ENCODE measurements at regions of chrX and their contacts with region 1.

Region 1: DNA sequence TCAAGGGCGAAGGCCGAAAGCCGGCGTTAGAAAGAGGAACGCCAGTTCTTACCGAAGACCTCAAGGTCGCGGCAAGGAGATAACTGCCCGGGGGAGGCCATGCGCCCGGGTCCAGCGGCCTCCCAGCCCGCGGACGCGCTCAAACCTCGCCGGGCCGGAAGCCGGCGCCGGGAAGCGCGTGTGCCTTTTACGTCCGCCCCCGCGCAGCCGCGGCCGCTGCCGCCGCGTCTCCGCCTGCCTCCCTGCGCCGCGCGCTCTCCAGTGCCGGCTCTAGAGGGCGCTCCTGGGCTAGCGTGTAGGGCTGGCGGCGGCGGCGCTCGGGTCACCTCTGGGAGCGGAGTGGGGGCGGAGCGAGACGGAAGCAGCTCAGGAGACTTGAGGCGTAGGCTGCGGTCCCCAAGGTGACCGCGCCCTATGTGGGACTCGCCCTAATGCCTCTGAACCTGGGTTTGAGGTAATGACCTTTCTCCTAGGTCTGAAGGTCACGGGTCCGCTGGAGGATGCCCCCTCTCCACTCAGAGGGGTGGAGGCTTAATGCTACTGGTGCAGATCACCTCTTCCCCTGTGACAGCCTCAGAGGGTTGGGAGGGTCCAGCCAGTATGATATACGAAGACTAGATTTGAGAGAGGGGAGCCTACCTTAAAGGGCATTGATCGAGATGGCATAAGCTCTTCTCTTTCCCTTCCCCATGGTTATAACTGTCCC is 839 bp downstream of the SLC25A5 start:
- DNase-seq: peak; percentile 81 to 90 (median 87)
- ATAC-seq: peak; percentile 87
- H3K4me3 ChIP-seq: peak overlapping the region; percentile 87
- H3K4me3 Mint-ChIP-seq: peak overlapping the region; percentile 78 to 97 (median 89)
- H3K27ac ChIP-seq: peak overlapping the region; percentile 99
- H3K27ac Mint-ChIP-seq: peak overlapping the region; percentile 82 to 95 (median 89)
- H3K4me1 ChIP-seq: peaks cover 5 to 6% of the 10 kb centered on the region in 2 donors
- H3K4me1 Mint-ChIP-seq: peaks cover 0 to 17% (median 10%) of the 10 kb centered on the region in 7 donors
- H3K27me3 ChIP-seq: no peaks in the 10 kb centered on the region
- H3K27me3 Mint-ChIP-seq: no peaks in the 10 kb centered on the region

Region 2: GRCh38 chrX:118345401-118346257 is 1123.5 kb before region 1 on chrX and contains the start of gene WDR44:
- CTCF ChIA-PET with region 1: no interaction called
- POLR2A ChIA-PET with region 1: no interaction called
- intact Hi-C with region 1: loop called in 1 of 2 experiments (anchors 1 kb)
- DNase-seq: peak; percentile 79 to 95 (median 92)
- ATAC-seq: peak; percentile 95
- H3K4me3 ChIP-seq: peak within 1 kb of the TSS; percentile 87
- H3K4me3 Mint-ChIP-seq: peak within 1 kb of the TSS; percentile 87 to 99 (median 98)
- H3K27ac ChIP-seq: peak within 1 kb of the TSS; percentile 93
- H3K27ac Mint-ChIP-seq: peak within 1 kb of the TSS; percentile 92 to 99 (median 96)
- H3K4me1 ChIP-seq: peaks cover 19 to 24% of the 10 kb centered on the region in 2 donors
- H3K4me1 Mint-ChIP-seq: peaks cover 5 to 40% (median 36%) of the 10 kb centered on the region in 7 donors
- H3K27me3 ChIP-seq: no peaks in the 10 kb centered on the region
- H3K27me3 Mint-ChIP-seq: no peaks in the 10 kb centered on the region
- total RNA-seq, gene WDR44: 12.0 to 19.0 (median 17.0) TPM

Region 3: DNA sequence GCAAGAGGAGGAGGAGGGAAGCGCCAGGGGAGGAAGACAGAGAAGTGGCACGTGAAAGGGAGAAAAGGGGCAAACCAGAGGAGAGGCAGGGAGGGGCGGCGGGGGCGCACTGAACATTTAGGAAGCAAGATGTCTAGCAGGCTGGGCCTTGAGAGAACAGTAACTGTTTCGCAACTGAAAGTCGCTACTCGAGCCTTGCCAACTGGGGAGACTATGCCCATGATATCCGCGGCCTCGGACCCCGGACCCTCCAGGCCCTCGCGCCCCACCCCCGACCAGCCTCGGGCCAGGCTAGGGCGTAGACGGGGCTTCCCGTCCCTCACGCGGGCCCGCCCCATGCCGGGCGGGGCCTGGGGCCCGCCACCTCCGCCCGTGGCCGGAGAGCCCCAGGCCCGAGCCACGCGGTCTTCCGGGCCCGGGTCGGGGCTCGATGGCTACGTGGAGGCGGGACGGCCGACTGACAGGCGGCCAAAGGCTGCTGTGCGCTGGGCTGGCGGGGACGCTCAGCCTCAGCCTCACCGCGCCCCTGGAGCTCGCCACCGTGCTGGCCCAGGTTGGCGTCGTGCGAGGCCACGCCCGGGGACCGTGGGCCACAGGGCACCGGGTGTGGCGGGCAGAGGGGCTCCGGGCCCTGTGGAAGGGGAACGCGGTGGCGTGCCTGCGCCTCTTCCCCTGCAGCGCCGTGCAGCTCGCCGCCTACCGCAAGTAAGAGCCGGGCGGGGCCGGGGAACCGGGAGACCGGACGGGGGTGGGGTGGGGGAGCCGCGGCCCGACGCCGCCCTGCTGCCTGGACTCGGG is 69.9 kb before region 1 on chrX and contains the start of gene SLC25A43:
- CTCF ChIA-PET with region 1: no interaction called
- POLR2A ChIA-PET with region 1: interaction called, 4 read pairs
- intact Hi-C with region 1: loop called (anchors 1 kb)
- DNase-seq: peak; percentile 6 to 49 (median 15)
- ATAC-seq: peak; percentile 85
- H3K4me3 ChIP-seq: peak within 1 kb of the TSS; percentile 34
- H3K4me3 Mint-ChIP-seq: peak within 1 kb of the TSS; percentile 74 to 95 (median 88)
- H3K27ac ChIP-seq: peak within 1 kb of the TSS; percentile 62
- H3K27ac Mint-ChIP-seq: peak within 1 kb of the TSS; percentile 47 to 96 (median 79)
- H3K4me1 ChIP-seq: no peaks in the 10 kb centered on the region
- H3K4me1 Mint-ChIP-seq: peaks cover 0 to 26% (median 10%) of the 10 kb centered on the region in 7 donors
- H3K27me3 ChIP-seq: no peaks in the 10 kb centered on the region
- H3K27me3 Mint-ChIP-seq: peaks cover 0 to 6% (median 0%) of the 10 kb centered on the region in 5 donors
- total RNA-seq, gene SLC25A43: 1.8 to 8.2 (median 2.6) TPM

Region 4: GRCh38 chrX:119442286-119442685 is 26.8 kb before region 1 on chrX:
- CTCF ChIA-PET with region 1: no interaction called
- POLR2A ChIA-PET with region 1: no interaction called
- intact Hi-C with region 1: no loop called
- DNase-seq: no peak
- ATAC-seq: no peak
- H3K4me3 ChIP-seq: no peak overlapping the region
- H3K4me3 Mint-ChIP-seq: no peak overlapping the region
- H3K27ac ChIP-seq: no peak overlapping the region
- H3K27ac Mint-ChIP-seq: no peak overlapping the region
- H3K4me1 ChIP-seq: no peaks in the 10 kb centered on the region
- H3K4me1 Mint-ChIP-seq: no peaks in the 10 kb centered on the region
- H3K27me3 ChIP-seq: no peaks in the 10 kb centered on the region
- H3K27me3 Mint-ChIP-seq: no peaks in the 10 kb centered on the region

Region 5: GRCh38 chrX:119516157-119516702 is 47.1 kb after region 1 on chrX:
- CTCF ChIA-PET with region 1: interaction called, 4 read pairs
- POLR2A ChIA-PET with region 1: no interaction called
- intact Hi-C with region 1: loop called in 1 of 2 experiments (anchors 1 kb)
- DNase-seq: peak; percentile 6 to 73 (median 55)
- ATAC-seq: peak; percentile 99
- H3K4me3 ChIP-seq: no peak overlapping the region
- H3K4me3 Mint-ChIP-seq: no peak overlapping the region
- H3K27ac ChIP-seq: no peak overlapping the region
- H3K27ac Mint-ChIP-seq: peak overlapping the region in 5 of 9 donors; percentile 4 to 57 (median 40)
- H3K4me1 ChIP-seq: no peaks in the 10 kb centered on the region
- H3K4me1 Mint-ChIP-seq: peaks cover 2 to 7% (median 4%) of the 10 kb centered on the region in 7 donors
- H3K27me3 ChIP-seq: no peaks in the 10 kb centered on the region
- H3K27me3 Mint-ChIP-seq: no peaks in the 10 kb centered on the region

Region 6: DNA sequence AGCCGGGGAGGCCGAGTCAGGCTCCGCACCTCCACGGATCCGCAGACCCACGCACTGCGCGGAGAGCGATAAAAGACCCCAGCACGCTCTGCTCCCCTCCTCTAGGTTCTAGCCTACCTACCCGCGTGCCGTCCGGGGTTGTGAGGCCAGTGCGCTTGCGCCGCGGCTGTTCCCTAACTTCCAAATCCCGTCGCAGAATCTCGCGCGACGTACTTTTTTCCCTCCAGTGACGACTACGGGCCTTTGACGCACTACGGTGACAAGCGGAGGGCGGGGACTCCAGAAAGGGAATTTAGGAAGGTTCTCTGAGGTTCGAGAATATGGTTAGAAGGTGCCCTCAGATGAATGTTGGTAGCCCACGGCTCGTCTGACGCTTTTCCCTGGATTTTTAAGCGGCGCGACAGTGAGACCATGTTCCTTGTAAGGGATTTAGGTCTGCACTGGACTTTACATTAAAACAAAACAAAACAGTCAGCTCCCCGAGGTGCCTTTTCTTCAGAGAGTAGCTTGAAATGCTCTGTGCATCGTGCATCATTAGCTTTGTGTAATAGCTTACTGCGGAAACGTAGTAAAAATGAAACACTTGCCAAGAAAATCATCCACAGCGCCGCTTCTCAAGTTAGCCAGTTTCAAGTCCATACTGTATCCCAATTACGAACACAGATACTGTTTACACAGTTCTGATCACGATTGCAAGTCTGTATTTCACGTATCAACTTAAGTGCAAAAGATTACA is 137.4 kb after region 1 on chrX and contains the start of gene NKRF:
- CTCF ChIA-PET with region 1: no interaction called
- POLR2A ChIA-PET with region 1: interaction called, 3 read pairs
- intact Hi-C with region 1: loop called in 1 of 2 experiments (anchors 1 kb)
- DNase-seq: peak; percentile 76 to 92 (median 88)
- ATAC-seq: peak; percentile 88
- H3K4me3 ChIP-seq: peak within 1 kb of the TSS; percentile 71
- H3K4me3 Mint-ChIP-seq: peak within 1 kb of the TSS; percentile 93 to 100 (median 94)
- H3K27ac ChIP-seq: peak within 1 kb of the TSS; percentile 90
- H3K27ac Mint-ChIP-seq: peak within 1 kb of the TSS; percentile 91 to 99 (median 98)
- H3K4me1 ChIP-seq: peaks cover 5 to 11% of the 10 kb centered on the region in 2 donors
- H3K4me1 Mint-ChIP-seq: peaks cover 6 to 48% (median 39%) of the 10 kb centered on the region in 7 donors
- H3K27me3 ChIP-seq: no peaks in the 10 kb centered on the region
- H3K27me3 Mint-ChIP-seq: peaks cover 0 to 4% (median 0%) of the 10 kb centered on the region in 5 donors
- total RNA-seq, gene NKRF: 9.9 to 16.4 (median 14.0) TPM

Region 7: GRCh38 chrX:119791438-119792231 is 322.6 kb after region 1 on chrX and contains the start of gene RPL39:
- CTCF ChIA-PET with region 1: no interaction called
- POLR2A ChIA-PET with region 1: no interaction called
- intact Hi-C with region 1: loop called in 1 of 2 experiments (anchors 2 kb)
- DNase-seq: peak; percentile 61 to 88 (median 82)
- ATAC-seq: peak; percentile 96
- H3K4me3 ChIP-seq: peak within 1 kb of the TSS; percentile 85
- H3K4me3 Mint-ChIP-seq: peak within 1 kb of the TSS; percentile 87 to 96 (median 92)
- H3K27ac ChIP-seq: peak within 1 kb of the TSS; percentile 91
- H3K27ac Mint-ChIP-seq: peak within 1 kb of the TSS; percentile 89 to 98 (median 97)
- H3K4me1 ChIP-seq: peaks cover 16 to 24% of the 10 kb centered on the region in 2 donors
- H3K4me1 Mint-ChIP-seq: peaks cover 5 to 33% (median 21%) of the 10 kb centered on the region in 7 donors
- H3K27me3 ChIP-seq: no peaks in the 10 kb centered on the region
- H3K27me3 Mint-ChIP-seq: no peaks in the 10 kb centered on the region
- total RNA-seq, gene RPL39: 2,181 to 4,347 (median 3,799) TPM

Region 8: GRCh38 chrX:119943185-119943988 is 474.3 kb after region 1 on chrX and contains the start of gene NKAP:
- CTCF ChIA-PET with region 1: no interaction called
- POLR2A ChIA-PET with region 1: no interaction called
- intact Hi-C with region 1: loop called (anchors 1 to 2 kb)
- DNase-seq: peak; percentile 53 to 84 (median 79)
- ATAC-seq: peak; percentile 95
- H3K4me3 ChIP-seq: peak within 1 kb of the TSS; percentile 84
- H3K4me3 Mint-ChIP-seq: peak within 1 kb of the TSS; percentile 84 to 100 (median 97)
- H3K27ac ChIP-seq: peak within 1 kb of the TSS; percentile 97
- H3K27ac Mint-ChIP-seq: peak within 1 kb of the TSS; percentile 84 to 99 (median 94)
- H3K4me1 ChIP-seq: peaks cover 8 to 15% of the 10 kb centered on the region in 2 donors
- H3K4me1 Mint-ChIP-seq: peaks cover 13 to 30% (median 22%) of the 10 kb centered on the region in 7 donors
- H3K27me3 ChIP-seq: no peaks in the 10 kb centered on the region
- H3K27me3 Mint-ChIP-seq: peaks cover 0 to 2% (median 2%) of the 10 kb centered on the region in 5 donors
- total RNA-seq, gene NKAP: 9.7 to 19.3 (median 14.9) TPM

Measured in naive thymus-derived CD4-positive, alpha-beta T cell (primary cell).